Activated B cell treated with CpG ODN at 0.5 μM for 24 hours (primary cell): ENCODE measurements at regions of chr15 and their contacts with region 1.

Region 1: GRCh38 chr15:42929306-42929848 is 8.8 kb upstream of the TTBK2 start:
- DNase-seq: no peak
- ATAC-seq: no peak
- H3K4me3 Mint-ChIP-seq: no peak overlapping the region
- H3K27ac Mint-ChIP-seq: no peak overlapping the region
- H3K4me1 Mint-ChIP-seq: no peaks in the 10 kb centered on the region
- H3K27me3 Mint-ChIP-seq: peaks cover 2% of the 10 kb centered on the region
- CTCF ChIP-seq: no peak

Region 2: DNA sequence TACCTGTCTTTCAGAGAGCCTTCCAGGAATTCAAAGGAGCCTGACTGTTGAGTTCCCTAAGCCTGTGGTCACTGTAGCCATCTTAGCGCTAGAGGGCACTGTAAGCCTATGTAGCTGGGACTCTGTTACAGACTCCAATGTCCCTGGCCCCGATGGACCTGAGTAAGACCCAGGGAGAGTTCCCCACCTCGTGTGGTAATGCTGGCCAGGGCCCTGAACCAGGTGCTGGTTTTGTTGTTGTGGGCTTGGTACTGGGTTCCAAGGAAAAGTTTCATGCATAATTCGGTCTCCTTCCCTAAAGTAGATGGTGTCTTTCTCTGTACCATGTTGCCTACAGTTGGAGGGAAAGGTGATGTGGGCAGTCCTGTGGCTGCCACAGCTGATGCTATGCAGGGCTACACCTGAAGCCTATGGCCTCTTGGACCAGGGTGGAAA is 224.9 kb before region 1 on chr15:
- CTCF ChIA-PET with region 1: interaction called, 46 read pairs
- POLR2A ChIA-PET with region 1: no interaction called
- intact Hi-C with region 1: loop called (anchors 1 kb)
- DNase-seq: peak; percentile 24
- ATAC-seq: peak; percentile 90
- H3K4me3 Mint-ChIP-seq: no peak overlapping the region
- H3K27ac Mint-ChIP-seq: no peak overlapping the region
- H3K4me1 Mint-ChIP-seq: no peaks in the 10 kb centered on the region
- H3K27me3 Mint-ChIP-seq: no peaks in the 10 kb centered on the region
- CTCF ChIP-seq: no peak